GM12878 (cell line): ENCODE measurements at regions of chr9 and their contacts with region 1.

Region 1: DNA sequence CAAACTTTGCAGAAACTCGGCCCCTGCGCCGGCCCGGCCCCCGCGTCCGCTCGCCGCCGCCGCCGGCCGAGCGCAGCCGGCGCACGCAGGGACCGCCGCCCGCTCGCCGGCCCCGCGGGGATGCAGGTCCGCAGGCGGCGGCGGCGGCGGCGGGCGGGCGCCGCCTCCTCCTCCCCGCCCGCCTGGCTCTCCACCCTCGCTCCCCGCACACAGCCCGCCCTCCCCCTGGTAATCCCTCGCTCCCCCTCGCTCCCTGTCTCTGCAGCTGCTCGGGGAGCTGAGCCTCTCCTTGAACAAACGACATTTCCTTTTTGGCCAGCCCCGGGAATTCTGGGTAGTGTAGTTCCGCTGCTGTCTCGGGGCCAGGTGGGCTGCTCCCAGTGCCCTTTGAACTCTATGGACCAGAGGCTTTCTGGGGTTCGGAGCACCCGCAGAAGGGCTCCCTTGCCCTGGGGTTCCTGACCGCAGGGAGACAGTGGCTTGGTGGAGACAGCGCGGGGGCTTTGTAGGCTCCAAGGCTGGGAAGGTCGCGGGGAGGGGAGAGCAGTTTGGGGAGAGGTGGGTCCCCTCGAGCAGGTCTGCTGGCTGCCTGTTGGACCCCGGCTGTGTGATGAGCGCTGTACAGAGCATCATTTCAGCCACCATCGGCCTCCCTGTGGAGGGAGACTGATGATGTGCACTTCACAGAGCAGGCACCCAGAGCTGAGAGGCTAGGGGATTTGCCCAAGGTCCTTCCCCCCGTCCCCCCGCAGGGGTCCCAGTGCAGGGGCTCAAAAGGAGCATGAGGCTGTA is 1.8 kb upstream of the FAM78A start:
- DNase-seq: no peak
- ATAC-seq: peak; percentile 37
- H3K4me3 ChIP-seq: peak overlapping the region; percentile 99; the same call in 1 of the 2 replicates
- H3K27ac ChIP-seq: no peak overlapping the region
- H3K4me1 ChIP-seq: peaks cover 9% of the 10 kb centered on the region; the same call in 1 of the 2 replicates
- H3K27me3 ChIP-seq: peaks cover 5 to 6% of the 10 kb centered on the region in 2 experiments; a peak in 3 of 4 replicates
- CTCF ChIP-seq: no peak
- EP300 ChIP-seq: no peak
- POLR2A ChIP-seq: peak; percentile 26; the same call in 1 of the 2 replicates
- RAD21 ChIP-seq: no peak

Region 2: GRCh38 chr9:130765137-130766020 is 512.7 kb before region 1 on chr9:
- CTCF ChIA-PET with region 1: no interaction called
- POLR2A ChIA-PET with region 1: no interaction called
- RAD21 ChIA-PET with region 1: no interaction called
- SMC1A ChIA-PET with region 1: no interaction called
- in situ Hi-C with region 1: no loop called
- intact Hi-C with region 1: no loop called
- DNase-seq: peak; percentile 64
- ATAC-seq: peak; percentile 78
- H3K4me3 ChIP-seq: peak overlapping the region; percentile 28; the same call in 1 of the 2 replicates
- H3K27ac ChIP-seq: peak overlapping the region; percentile 84
- H3K4me1 ChIP-seq: peaks cover 65% of the 10 kb centered on the region
- H3K27me3 ChIP-seq: no peaks in the 10 kb centered on the region
- CTCF ChIP-seq: no peak
- EP300 ChIP-seq: peak; percentile 5 to 45; a peak in 1 of 4 replicates
- POLR2A ChIP-seq: no peak
- RAD21 ChIP-seq: no peak

Region 3: GRCh38 chr9:130870491-130871381 is 407.4 kb before region 1 on chr9:
- CTCF ChIA-PET with region 1: no interaction called
- POLR2A ChIA-PET with region 1: no interaction called
- RAD21 ChIA-PET with region 1: no interaction called
- SMC1A ChIA-PET with region 1: no interaction called
- in situ Hi-C with region 1: no loop called
- intact Hi-C with region 1: no loop called
- DNase-seq: peak; percentile 62
- ATAC-seq: peak; percentile 94
- H3K4me3 ChIP-seq: no peak overlapping the region
- H3K27ac ChIP-seq: 0 out of 2 replicates have a peak overlapping the region, but pooled peaks have one; percentile 7
- H3K4me1 ChIP-seq: peaks cover 25% of the 10 kb centered on the region
- H3K27me3 ChIP-seq: no peaks in the 10 kb centered on the region
- CTCF ChIP-seq: no peak
- EP300 ChIP-seq: peak in 1 of 2 experiments; percentile 25; a peak in 1 of 4 replicates
- POLR2A ChIP-seq: no peak
- RAD21 ChIP-seq: no peak

Region 4: GRCh38 chr9:131227112-131227958 is 50.8 kb before region 1 on chr9:
- CTCF ChIA-PET with region 1: no interaction called
- POLR2A ChIA-PET with region 1: no interaction called
- RAD21 ChIA-PET with region 1: no interaction called
- SMC1A ChIA-PET with region 1: no interaction called
- in situ Hi-C with region 1: no loop called
- intact Hi-C with region 1: no loop called
- DNase-seq: no peak
- ATAC-seq: peak; percentile 25; the same call in 2 of the 3 replicates
- H3K4me3 ChIP-seq: no peak overlapping the region
- H3K27ac ChIP-seq: no peak overlapping the region
- H3K4me1 ChIP-seq: no peaks in the 10 kb centered on the region
- H3K27me3 ChIP-seq: no peaks in the 10 kb centered on the region
- CTCF ChIP-seq: no peak
- EP300 ChIP-seq: no peak
- POLR2A ChIP-seq: no peak
- RAD21 ChIP-seq: no peak

Region 5: GRCh38 chr9:131253891-131254491 is 24.1 kb before region 1 on chr9:
- CTCF ChIA-PET with region 1: interaction called, 151 read pairs
- POLR2A ChIA-PET with region 1: interaction called, 267 read pairs
- RAD21 ChIA-PET with region 1: interaction called, 181 read pairs
- SMC1A ChIA-PET with region 1: interaction called, 154 read pairs
- in situ Hi-C with region 1: no loop called
- intact Hi-C with region 1: loop called (anchors 1 kb)
- DNase-seq: no peak
- ATAC-seq: peak; percentile 4
- H3K4me3 ChIP-seq: no peak overlapping the region
- H3K27ac ChIP-seq: peak overlapping the region; percentile 78
- H3K4me1 ChIP-seq: peaks cover 48% of the 10 kb centered on the region
- H3K27me3 ChIP-seq: no peaks in the 10 kb centered on the region
- CTCF ChIP-seq: no peak
- EP300 ChIP-seq: no peak
- POLR2A ChIP-seq: peak; percentile 65
- RAD21 ChIP-seq: no peak

Region 6: GRCh38 chr9:131262327-131263032 is 15.6 kb before region 1 on chr9:
- CTCF ChIA-PET with region 1: interaction called, 151 read pairs
- POLR2A ChIA-PET with region 1: interaction called, 267 read pairs
- RAD21 ChIA-PET with region 1: interaction called, 181 read pairs
- SMC1A ChIA-PET with region 1: interaction called, 154 read pairs
- in situ Hi-C with region 1: no loop called
- intact Hi-C with region 1: no loop called
- DNase-seq: no peak
- ATAC-seq: peak; percentile 92
- H3K4me3 ChIP-seq: no peak overlapping the region
- H3K27ac ChIP-seq: peak overlapping the region; percentile 66
- H3K4me1 ChIP-seq: peaks cover 24% of the 10 kb centered on the region
- H3K27me3 ChIP-seq: no peaks in the 10 kb centered on the region
- CTCF ChIP-seq: no peak
- EP300 ChIP-seq: peak in 1 of 2 experiments; percentile 62; a peak in 1 of 4 replicates
- POLR2A ChIP-seq: no peak
- RAD21 ChIP-seq: no peak

Region 7: GRCh38 chr9:131618071-131618479 is 340.0 kb after region 1 on chr9:
- CTCF ChIA-PET with region 1: no interaction called
- POLR2A ChIA-PET with region 1: no interaction called
- RAD21 ChIA-PET with region 1: no interaction called
- SMC1A ChIA-PET with region 1: no interaction called
- in situ Hi-C with region 1: no loop called
- intact Hi-C with region 1: no loop called
- DNase-seq: no peak
- ATAC-seq: no peak
- H3K4me3 ChIP-seq: no peak overlapping the region
- H3K27ac ChIP-seq: no peak overlapping the region
- H3K4me1 ChIP-seq: peaks cover 28% of the 10 kb centered on the region
- H3K27me3 ChIP-seq: no peaks in the 10 kb centered on the region
- CTCF ChIP-seq: no peak
- EP300 ChIP-seq: no peak
- POLR2A ChIP-seq: no peak; the same call in 1 of the 2 replicates
- RAD21 ChIP-seq: no peak